ENCODE measurements at regions of chr13 and their contacts with region 1.

Region 1: DNA sequence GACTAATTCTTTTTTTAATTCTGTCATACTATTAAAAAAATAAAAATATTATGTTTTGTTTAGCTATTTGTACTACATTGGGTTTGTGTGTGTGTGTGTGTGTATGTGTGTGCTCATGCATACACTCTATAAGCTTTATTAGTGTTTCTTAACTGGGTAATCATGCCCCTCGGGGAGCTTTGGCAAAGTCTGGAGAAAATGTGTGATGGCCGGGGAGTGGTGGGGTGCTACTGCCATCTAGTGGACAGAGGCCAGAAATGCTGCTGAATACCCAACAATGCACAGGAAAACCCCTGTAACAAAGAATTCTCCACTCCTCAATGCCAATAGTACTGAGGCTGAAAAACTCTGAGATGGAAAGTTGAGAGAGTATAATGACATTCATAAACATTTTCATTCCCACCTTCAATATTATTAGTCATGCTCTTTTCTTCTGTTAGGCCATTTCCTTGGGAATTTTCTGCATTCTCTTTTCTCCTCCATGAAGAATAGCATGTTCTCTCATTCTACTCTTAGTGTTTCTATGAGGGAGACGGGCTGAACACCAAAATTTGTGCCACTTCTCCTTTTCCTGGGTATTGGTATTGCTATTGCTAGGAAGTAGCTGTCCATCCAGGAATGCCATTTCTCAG is 157.3 kb downstream of the DNAJC3 start:
- DNase-seq: peak; percentile 57
- ATAC-seq: peak; percentile 86 to 92
- H3K4me3 ChIP-seq: no peak overlapping the region
- H3K27ac ChIP-seq: no peak overlapping the region
- H3K4me1 ChIP-seq: peaks cover 5% of the 10 kb centered on the region
- H3K27me3 ChIP-seq: no peaks in the 10 kb centered on the region
- CTCF ChIP-seq: peak; percentile 87

Region 2: GRCh38 chr13:95624020-95624419 is 210.2 kb before region 1 on chr13:
- intact Hi-C with region 1: loop called (anchors 10 kb)
- DNase-seq: no peak
- ATAC-seq: peak; percentile 69 to 70
- H3K4me3 ChIP-seq: no peak overlapping the region
- H3K27ac ChIP-seq: no peak overlapping the region
- H3K4me1 ChIP-seq: no peaks in the 10 kb centered on the region
- H3K27me3 ChIP-seq: no peaks in the 10 kb centered on the region
- CTCF ChIP-seq: peak; percentile 59

Region 3: DNA sequence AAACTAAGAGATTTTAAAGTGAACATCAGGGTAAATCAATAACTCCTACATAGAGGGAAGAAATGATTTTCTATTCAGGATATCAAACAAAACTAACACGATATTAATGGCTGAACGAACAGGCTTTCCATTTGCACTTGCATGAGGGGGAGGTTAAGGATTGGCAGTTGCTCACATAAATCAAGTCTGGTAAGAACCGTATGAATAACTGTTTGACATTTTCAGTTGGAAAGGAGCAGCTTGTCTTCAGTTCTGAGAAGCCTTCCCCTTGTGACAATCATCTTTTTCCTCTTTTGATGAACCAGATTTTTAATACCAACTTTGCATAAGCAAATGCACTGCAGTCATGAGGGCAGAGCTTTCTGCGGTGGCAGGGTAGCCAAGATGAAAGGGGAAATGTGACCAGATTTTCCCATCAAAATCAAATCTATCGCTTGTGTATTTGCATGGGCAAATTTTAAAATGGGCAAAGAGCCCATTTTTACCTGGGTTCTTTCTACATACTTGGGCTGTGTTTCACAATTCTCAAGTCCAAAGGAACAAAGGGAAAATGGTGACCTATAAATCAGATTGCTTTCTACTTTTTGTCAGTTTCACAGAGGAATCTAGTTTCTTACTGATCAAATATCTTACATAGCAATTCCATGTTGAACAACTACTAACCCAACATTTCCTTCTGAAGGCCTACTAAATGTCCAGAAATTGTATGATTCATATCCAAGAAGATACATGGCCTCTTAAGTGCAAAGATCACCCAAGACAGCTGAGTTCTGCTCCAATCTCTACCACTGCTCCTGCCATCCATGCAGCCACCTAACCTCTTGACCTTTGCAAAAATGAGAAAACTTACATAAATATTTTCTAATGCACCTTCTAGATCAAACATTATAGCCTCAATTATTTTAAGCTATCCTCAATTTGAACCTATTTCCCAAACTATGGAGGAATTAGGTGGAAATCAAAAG is 910.4 kb after region 1 on chr13:
- intact Hi-C with region 1: no loop called
- DNase-seq: no peak
- ATAC-seq: no peak
- H3K4me3 ChIP-seq: no peak overlapping the region
- H3K27ac ChIP-seq: no peak overlapping the region
- H3K4me1 ChIP-seq: no peaks in the 10 kb centered on the region
- H3K27me3 ChIP-seq: no peaks in the 10 kb centered on the region
- CTCF ChIP-seq: no peak